ENCODE measurements at regions of chr14 and their contacts with region 1.

Region 1: DNA sequence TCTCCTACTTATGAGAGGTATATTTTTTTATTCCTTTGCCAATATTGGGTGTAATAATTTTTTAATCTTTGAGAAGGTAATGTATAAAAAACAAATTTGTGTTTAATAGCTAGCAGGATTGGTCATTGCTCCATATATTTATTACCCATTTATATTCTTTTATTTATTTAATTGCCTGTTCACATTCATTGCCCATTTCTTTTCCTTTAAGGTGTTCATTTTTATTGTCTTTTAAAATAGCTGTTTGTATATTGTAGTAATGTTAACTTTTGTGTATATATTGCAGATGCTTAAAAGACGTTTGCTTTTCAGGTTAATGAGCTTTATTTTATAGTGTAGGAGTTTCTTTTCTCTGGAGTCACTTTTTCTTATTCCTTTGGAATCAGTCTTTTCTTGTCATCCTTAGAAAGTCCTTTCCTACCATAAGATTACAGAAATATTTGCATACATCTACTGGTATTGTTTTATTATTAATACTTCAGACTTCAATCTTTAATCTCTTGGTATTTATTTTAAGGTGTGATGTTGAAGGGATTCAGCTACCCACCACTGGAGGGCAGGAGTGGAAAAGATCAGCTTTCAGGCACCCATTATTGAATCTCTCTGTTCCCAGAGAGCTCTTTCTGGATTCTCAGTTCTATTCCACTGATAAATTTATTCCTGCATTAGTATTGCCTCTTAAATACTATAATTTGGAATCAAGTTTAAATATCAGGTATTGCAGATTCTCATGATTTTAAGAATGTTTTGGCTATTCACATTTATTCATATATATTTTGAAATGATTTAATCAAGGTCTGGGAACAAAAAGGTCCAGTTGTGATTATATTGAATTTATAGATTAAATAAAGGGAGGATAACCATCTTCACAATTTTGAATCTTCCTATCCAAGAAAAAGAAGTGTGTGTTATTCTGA is 17.3 kb downstream of the PPM1A start:
- DNase-seq: peak; percentile 55
- H3K4me3 ChIP-seq: no peak overlapping the region
- H3K27ac ChIP-seq: no peak overlapping the region
- H3K4me1 ChIP-seq: no peaks in the 10 kb centered on the region
- H3K27me3 ChIP-seq: no peaks in the 10 kb centered on the region
- CTCF ChIP-seq: peak; percentile 75

Region 2: DNA sequence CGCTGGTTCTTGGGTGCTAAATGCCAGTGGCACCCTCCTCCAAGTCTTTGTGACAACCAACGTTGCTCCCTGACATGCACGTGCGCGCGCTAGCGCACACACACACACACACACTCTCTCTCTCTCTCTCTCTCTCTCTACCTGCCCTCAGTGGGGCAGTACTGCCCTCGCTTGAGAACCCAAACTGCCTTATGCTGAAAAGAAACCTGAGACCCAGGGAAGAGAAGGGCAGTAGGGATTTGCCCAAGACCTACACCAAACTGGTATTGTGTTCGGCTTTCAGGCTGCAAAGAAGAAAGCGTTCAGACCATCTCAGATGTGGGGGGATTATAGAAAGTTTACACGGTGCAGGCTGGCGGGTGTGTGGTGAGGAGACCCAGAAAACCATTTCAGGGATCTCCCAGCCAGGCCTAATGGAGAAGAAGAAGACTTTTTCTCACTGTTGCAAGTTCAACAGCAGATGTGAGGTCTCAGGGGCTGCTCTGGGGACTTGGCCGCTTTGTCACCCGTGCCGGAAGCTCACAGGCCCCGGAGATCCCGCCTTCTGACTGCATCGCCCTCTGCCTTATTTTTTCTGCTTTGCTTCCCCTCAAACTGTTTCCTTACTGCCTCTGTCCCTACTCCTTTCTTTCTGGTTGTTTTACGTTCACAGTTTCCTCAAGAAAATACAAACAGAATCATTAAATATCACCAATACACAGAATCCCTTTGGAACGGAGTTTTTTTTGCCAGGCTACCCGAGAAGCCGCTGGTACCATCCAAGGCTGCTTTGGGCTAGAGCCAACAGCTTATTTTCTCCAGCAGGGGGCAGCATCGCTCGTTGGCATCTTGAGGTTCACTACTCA is 65.1 kb after region 1 on chr14:
- CTCF ChIA-PET with region 1: interaction called, 8 read pairs
- POLR2A ChIA-PET with region 1: no interaction called
- intact Hi-C with region 1: loop called (anchors 2 kb)
- DNase-seq: peak; percentile 82
- H3K4me3 ChIP-seq: no peak overlapping the region
- H3K27ac ChIP-seq: no peak overlapping the region
- H3K4me1 ChIP-seq: peaks cover 5% of the 10 kb centered on the region
- H3K27me3 ChIP-seq: no peaks in the 10 kb centered on the region
- CTCF ChIP-seq: peak; percentile 92

Region 3: GRCh38 chr14:60485598-60486251 is 219.4 kb after region 1 on chr14 and contains the start of gene C14orf39:
- CTCF ChIA-PET with region 1: no interaction called
- POLR2A ChIA-PET with region 1: no interaction called
- intact Hi-C with region 1: loop called (anchors 5 kb)
- DNase-seq: peak; percentile 89
- H3K4me3 ChIP-seq: peak within 1 kb of the TSS; percentile 54
- H3K27ac ChIP-seq: peak within 1 kb of the TSS; percentile 43
- H3K4me1 ChIP-seq: no peaks in the 10 kb centered on the region
- H3K27me3 ChIP-seq: peaks cover 24% of the 10 kb centered on the region
- CTCF ChIP-seq: no peak
- total RNA-seq, gene C14orf39: 1.5 and 3.1 TPM in 2 replicates

Region 4: GRCh38 chr14:60679566-60680258 is 413.4 kb after region 1 on chr14:
- CTCF ChIA-PET with region 1: no interaction called
- POLR2A ChIA-PET with region 1: no interaction called
- intact Hi-C with region 1: no loop called
- DNase-seq: no peak
- H3K4me3 ChIP-seq: no peak overlapping the region
- H3K27ac ChIP-seq: no peak overlapping the region
- H3K4me1 ChIP-seq: no peaks in the 10 kb centered on the region
- H3K27me3 ChIP-seq: no peaks in the 10 kb centered on the region
- CTCF ChIP-seq: no peak

Region 5: DNA sequence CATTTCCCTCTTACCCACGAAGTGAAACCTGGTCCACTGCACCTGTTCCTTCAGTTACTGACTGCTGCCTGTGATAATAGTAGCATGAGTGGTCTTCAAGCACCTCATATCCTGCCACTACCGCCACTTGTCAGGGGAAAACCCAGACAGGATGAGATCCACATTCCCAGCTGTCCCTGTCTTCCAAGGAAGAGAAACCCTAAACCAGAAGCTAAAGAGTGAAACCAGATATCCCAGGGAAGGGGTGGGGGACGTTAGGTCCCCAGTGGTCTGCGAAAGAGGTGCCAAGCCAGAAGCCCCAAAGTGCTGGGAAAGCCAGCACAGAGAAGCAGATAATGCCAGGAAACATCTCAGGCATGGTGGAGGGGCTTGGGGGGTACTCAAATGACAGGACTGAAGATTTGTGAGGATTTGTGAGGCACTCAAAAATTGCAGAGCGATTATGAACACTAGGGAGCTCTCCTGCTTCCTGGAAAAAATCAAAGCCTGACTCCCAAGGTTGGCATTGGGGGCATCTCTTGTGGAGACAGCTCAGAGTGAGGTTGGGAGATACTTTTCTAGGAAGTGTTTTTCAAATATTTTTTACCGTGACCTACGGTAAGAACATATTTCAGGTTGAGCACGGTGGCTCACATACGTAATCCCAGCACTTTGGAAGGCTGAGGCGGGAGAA is 936.9 kb after region 1 on chr14:
- CTCF ChIA-PET with region 1: no interaction called
- POLR2A ChIA-PET with region 1: no interaction called
- intact Hi-C with region 1: no loop called
- DNase-seq: no peak
- H3K4me3 ChIP-seq: no peak overlapping the region
- H3K27ac ChIP-seq: no peak overlapping the region
- H3K4me1 ChIP-seq: no peaks in the 10 kb centered on the region
- H3K27me3 ChIP-seq: no peaks in the 10 kb centered on the region
- CTCF ChIP-seq: no peak

Measured in A673 (cell line).